GM18951 (cell line): ENCODE measurements at regions of chr13 and their contacts with region 1.

Region 1: GRCh38 chr13:99269627-99270241 is 11.6 kb upstream of the GPR18 start:
- POLR2A ChIP-seq: no peak

Region 2: DNA sequence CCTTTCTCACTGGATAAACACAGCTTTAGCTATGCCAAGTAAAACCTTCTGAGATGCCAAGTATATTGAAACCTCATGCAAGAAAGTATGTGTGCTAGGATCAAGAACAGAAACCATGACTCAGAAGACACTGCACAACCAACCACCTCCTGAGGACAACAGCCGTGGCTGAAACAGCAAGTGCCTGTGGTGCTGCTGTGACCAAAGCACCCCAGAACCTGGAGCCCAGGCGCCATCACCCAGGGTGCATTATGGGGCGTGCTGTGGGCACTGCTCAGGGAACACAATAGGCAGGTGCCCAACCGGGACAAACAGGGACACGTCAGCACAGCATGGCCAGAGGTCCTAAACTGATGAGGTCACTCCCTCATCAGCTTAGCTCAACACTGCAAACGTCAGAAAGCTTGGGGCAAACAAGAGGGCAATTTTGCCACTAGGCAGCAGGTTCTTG is 415.9 kb before region 1 on chr13:
- in situ Hi-C with region 1: loop called (anchors 25 kb)
- POLR2A ChIP-seq: no peak

Region 3: DNA sequence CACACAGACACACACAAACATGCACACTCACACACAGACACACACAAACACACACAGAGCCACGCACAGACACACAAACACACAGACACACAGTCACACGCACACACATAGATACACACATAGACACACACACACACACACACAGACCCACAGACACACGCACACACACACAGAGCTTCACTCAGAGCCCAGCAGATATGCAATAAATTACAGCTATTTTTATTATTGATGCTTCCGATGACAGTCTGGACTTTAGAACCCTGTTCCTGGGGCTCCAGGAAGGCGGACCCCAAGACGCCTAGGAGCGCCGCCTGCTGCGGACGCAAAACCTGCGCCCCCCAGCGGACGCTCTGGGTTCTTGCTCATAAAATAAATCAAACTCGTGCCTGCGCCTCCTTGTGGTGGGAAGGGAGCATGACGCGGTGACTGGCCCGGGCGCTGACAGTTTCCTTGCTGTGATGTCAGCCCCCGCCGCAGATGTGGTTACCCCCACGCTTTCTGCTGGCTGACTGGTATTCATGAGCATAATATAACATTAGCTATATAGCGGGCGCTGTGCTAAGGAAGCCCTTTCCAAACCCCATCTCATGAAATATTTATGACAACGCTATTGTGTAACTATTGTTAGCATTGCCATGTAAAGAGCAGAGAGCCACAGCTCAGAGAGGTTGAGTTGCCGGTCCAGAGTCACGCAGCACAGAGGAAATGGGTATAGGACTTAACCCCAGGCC is 167.1 kb after region 1 on chr13:
- in situ Hi-C with region 1: loop called (anchors 5 kb)
- POLR2A ChIP-seq: no peak